Lower leg skin (tissue), 4 donors: ENCODE measurements at regions of chr14 and their contacts with region 1.

Region 1: GRCh38 chr14:53545217-53545616 is 392.1 kb upstream of the DDHD1 start:
- DNase-seq: no peak
- H3K4me3 ChIP-seq: no peak overlapping the region
- CTCF ChIP-seq: no peak
- POLR2A ChIP-seq: no peak

Region 2: GRCh38 chr14:53473480-53473879 is 71.7 kb before region 1 on chr14:
- intact Hi-C with region 1: no loop called
- DNase-seq: no peak
- H3K4me3 ChIP-seq: no peak overlapping the region
- CTCF ChIP-seq: no peak
- POLR2A ChIP-seq: no peak

Region 3: GRCh38 chr14:54338696-54339317 is 793.6 kb after region 1 on chr14:
- intact Hi-C with region 1: loop called (anchors 10 kb)
- DNase-seq: no peak
- H3K4me3 ChIP-seq: no peak overlapping the region
- CTCF ChIP-seq: no peak
- POLR2A ChIP-seq: no peak